Adrenal gland (tissue), 19 donors: ENCODE measurements at regions of chr18 and their contacts with region 1.

Region 1: DNA sequence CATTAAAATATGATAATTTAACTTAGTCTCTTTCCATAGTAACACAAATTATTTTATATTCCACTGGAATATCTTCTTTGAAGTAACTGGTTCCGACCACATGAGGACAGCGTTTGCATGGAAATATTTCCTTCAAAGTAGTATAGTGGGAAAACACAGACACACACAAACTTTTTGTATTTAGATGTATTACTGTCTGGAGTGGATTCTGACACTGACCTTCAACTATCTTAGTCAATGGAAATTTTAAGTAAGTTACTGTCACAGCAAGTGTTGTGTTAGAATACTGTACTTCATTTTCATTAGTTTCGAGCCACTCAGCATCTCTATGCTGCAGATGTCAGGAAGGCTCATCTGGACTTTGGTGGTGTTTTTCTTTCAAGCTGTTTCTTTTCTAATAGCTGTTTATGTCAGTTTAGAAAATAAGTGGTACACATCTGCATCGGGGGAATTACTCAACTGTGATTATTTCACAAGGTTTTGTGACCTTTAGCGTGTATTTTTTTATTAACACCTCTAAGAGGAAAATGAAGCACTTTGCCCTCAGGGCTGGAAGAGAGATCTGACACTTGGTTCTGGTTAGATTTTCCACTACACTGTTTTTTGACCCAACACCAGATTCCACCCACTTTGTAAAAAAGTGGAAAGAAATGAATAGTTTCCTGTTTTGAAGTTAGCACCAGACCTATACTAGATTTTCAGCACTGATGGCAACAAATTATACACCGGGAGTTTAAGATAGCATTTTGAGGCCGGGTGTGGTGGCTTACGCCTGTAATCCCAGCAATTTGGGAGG is 18.9 kb upstream of the THOC1 start:
- DNase-seq: peak in 1 of 7 donors; percentile 14
- H3K4me3 ChIP-seq: no peak overlapping the region
- H3K27ac ChIP-seq: no peak overlapping the region
- H3K4me1 ChIP-seq: no peaks in the 10 kb centered on the region
- H3K27me3 ChIP-seq: peaks cover 6% of the 10 kb centered on the region
- CTCF ChIP-seq: peak in 5 of 6 experiments; percentile 26 to 68 (median 56)
- POLR2A ChIP-seq: no peak

Region 2: GRCh38 chr18:354003-354402 is 67.3 kb after region 1 on chr18:
- intact Hi-C with region 1: no loop called
- DNase-seq: no peak
- H3K4me3 ChIP-seq: no peak overlapping the region
- H3K27ac ChIP-seq: no peak overlapping the region
- H3K4me1 ChIP-seq: no peaks in the 10 kb centered on the region
- H3K27me3 ChIP-seq: no peaks in the 10 kb centered on the region
- CTCF ChIP-seq: no peak
- POLR2A ChIP-seq: no peak

Region 3: GRCh38 chr18:610214-610903 is 323.6 kb after region 1 on chr18:
- intact Hi-C with region 1: loop called (anchors 5 to 10 kb)
- DNase-seq: no peak
- H3K4me3 ChIP-seq: no peak overlapping the region
- H3K27ac ChIP-seq: no peak overlapping the region
- H3K4me1 ChIP-seq: peaks cover 0 to under 1% of the 10 kb centered on the region in 2 donors
- H3K27me3 ChIP-seq: no peaks in the 10 kb centered on the region
- CTCF ChIP-seq: no peak
- POLR2A ChIP-seq: no peak